BJ (cell line): ENCODE measurements at regions of chr5 and their contacts with region 1.

Region 1: GRCh38 chr5:180328296-180329137 is 24.6 kb downstream of the GFPT2 start:
- DNase-seq: no peak
- H3K4me3 ChIP-seq: no peak overlapping the region
- H3K27me3 ChIP-seq: no peaks in the 10 kb centered on the region
- CTCF ChIP-seq: peak; percentile 76

Region 2: DNA sequence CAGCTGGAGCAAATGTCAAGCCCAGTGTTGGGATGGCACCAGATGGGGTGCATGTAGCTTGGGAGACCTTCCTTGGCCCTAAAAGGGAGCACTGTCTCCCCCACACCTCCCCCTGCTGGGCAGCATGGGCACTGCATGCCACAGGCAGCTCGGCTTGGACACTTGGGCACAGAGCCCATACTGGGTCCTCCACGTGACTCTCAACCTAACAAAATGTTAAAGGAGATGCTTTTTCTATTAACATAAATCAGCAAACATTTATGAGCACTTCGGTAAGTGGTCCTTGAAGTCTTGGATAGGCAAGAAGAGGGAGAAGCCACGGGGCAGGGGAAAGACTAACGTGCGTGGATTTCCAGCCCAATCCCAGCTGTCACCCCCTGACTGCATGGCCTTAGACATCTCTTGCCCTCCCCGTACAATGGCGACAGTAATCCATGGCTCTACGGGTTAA is 12.7 kb before region 1 on chr5:
- CTCF ChIA-PET with region 1: interaction called, 43 read pairs
- POLR2A ChIA-PET with region 1: no interaction called
- DNase-seq: no peak
- H3K4me3 ChIP-seq: no peak overlapping the region
- H3K27me3 ChIP-seq: no peaks in the 10 kb centered on the region
- CTCF ChIP-seq: peak; percentile 93

Region 3: DNA sequence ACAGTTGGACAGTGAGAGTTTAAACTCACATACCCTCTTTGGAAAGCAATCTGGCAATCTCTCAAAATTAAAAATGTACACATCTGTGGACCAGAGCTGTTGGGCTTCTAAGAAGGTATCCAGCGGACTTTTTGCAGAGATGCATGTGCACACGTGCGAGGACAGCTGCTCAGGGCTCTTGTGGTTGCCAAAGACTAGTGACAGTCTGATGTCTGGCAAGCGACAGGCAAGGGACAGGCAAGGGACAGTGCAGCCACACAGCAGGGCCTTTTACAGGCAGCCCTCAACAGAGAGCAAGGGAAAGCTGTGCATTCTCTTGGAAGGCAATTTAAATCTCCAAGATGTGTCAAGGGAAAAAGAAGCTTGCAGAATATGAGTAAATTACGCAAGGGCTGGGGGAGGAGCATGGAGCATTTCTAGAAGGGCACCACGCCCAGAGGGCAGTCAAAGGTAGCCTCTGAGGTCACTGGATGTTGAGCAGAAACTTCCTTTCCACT is 15.4 kb after region 1 on chr5:
- CTCF ChIA-PET with region 1: interaction called, 27 read pairs
- POLR2A ChIA-PET with region 1: no interaction called
- DNase-seq: no peak
- H3K4me3 ChIP-seq: no peak overlapping the region
- H3K27me3 ChIP-seq: no peaks in the 10 kb centered on the region
- CTCF ChIP-seq: no peak

Region 4: DNA sequence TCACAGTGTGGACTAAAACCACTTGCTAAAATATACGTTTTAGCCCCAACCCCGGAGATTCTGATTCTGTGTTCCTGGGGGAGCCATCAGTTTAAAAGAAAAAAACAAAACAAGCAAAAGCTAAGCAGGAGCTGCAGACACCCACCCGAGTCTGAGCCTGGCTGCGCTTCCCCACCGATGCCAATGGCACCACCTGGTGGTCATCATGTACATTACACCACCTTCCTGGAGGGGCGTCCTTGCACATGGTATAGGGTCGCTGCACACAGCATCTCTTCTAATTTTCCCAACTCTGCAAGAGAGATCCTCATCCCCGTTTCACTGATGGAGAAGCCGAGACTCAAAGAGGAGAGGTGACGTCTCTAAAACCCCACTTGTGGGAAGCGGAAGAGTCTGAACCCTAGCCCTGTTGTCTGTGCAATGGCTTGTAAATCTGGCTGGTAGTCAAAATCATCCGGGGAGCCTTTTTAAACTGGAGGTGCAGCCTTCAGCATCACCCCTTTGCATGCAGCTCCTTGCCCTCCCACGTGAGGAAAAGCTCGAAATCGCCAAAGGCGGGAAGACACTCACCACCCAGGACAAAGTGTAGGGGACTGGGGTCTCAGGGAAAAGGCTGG is 142.6 kb after region 1 on chr5:
- CTCF ChIA-PET with region 1: interaction called, 11 read pairs
- POLR2A ChIA-PET with region 1: no interaction called
- DNase-seq: no peak
- H3K4me3 ChIP-seq: no peak overlapping the region
- H3K27me3 ChIP-seq: no peaks in the 10 kb centered on the region; the same call in none of the 2 replicates
- CTCF ChIP-seq: peak; percentile 91